GM10248 (cell line): ENCODE measurements at regions of chr1 and their contacts with region 1.

Region 1: DNA sequence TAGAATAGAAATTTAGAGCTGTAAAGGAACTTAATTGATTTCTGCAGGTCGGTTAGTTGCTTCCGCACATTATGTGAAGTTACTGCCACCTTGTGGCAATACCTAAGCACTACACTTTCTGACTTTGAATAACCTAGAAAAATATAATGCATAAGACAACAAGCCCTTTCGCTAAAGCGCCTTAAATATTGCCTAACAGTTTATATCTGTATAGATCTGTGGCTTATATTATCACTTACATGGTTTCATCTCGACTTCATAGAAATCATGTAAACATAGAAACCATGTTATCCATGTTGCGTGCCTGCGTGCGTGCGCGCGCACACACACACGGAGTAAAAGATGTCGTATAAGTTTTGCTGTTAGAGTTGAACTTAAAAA is 10.9 kb upstream of the IFI16 start:
- DNase-seq: peak; percentile 56
- CTCF ChIP-seq: peak; percentile 85

Region 2: GRCh38 chr1:158506369-158506987 is 492.3 kb before region 1 on chr1:
- CTCF ChIA-PET with region 1: interaction called, 13 read pairs
- POLR2A ChIA-PET with region 1: no interaction called
- DNase-seq: peak; percentile 19
- CTCF ChIP-seq: peak; percentile 60

Region 3: DNA sequence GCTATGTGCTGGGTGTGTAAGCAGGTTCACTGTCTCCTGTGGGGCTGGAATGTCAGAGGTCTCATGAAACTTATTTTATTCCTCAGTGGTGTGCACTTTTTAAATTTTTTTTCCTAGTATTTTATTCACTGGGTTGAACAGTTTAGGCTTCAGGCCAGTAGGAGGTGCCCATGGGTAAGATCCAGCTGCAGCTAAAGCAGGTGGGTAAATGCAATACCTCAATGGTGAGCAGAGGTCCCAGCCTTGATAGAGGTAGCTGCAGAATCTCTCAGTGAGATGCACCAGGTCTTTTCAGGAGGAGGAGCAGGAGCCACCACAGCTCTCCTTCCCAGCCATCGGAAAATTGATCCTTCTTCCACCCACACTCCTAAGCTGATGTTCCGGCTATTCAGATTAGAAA is 205.2 kb before region 1 on chr1:
- CTCF ChIA-PET with region 1: interaction called, 12 read pairs
- POLR2A ChIA-PET with region 1: no interaction called
- DNase-seq: no peak
- CTCF ChIP-seq: peak; percentile 31

Region 4: DNA sequence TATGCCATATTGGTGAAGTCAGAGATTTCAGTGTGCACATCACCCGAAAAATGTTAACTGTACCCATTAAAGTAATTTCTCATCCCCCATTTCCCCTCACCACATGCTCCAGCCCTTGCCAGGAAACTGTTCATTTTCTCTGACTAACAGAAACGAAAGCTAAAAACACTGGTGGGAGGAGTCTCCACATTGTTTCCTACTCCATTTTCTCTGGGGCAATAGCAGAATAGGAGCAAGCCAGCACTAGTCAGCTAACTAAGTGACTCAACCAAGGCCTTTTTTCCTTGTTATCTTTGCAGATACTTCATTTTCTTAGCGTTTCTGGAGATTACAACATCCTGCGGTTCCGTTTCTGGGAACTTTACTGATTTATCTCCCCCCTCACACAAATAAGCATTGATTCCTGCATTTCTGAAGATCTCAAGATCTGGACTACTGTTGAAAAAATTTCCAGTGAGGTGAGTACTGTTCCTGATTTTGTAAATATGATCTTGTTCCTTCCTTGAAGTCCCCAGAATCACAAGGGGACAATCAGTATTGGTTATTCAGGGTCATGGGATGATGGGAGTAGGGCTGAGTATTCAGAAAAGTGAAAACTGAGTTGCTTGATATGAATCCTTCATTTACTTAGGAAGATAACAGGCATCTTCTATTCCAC is 11.1 kb after region 1 on chr1 and contains the start of gene IFI16:
- CTCF ChIA-PET with region 1: interaction called, 16 read pairs
- POLR2A ChIA-PET with region 1: no interaction called
- DNase-seq: peak; percentile 53
- CTCF ChIP-seq: no peak

Region 5: DNA sequence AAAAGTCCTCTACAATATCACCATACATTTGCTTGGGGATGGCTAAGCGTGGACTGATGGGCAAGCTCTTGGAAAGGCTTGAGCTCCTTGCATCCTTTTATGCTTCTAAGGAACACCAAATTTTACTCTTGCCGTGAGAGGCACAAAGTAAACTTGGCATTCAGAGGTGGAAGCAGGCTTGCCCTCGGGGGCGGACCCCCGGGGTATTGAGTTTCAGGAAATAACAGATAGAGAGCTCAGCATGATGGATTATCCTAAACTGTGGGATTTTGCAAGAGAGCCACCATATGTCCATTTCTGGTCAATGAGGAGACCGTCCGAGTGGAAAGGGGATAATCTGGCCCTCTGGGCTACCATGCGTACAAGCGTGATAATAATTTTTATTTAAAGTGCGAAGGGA is 25.0 kb after region 1 on chr1:
- CTCF ChIA-PET with region 1: no interaction called
- POLR2A ChIA-PET with region 1: no interaction called
- DNase-seq: no peak
- CTCF ChIP-seq: no peak